Calu3 (cell line): ENCODE measurements at regions of chr3 and their contacts with region 1.

Region 1: DNA sequence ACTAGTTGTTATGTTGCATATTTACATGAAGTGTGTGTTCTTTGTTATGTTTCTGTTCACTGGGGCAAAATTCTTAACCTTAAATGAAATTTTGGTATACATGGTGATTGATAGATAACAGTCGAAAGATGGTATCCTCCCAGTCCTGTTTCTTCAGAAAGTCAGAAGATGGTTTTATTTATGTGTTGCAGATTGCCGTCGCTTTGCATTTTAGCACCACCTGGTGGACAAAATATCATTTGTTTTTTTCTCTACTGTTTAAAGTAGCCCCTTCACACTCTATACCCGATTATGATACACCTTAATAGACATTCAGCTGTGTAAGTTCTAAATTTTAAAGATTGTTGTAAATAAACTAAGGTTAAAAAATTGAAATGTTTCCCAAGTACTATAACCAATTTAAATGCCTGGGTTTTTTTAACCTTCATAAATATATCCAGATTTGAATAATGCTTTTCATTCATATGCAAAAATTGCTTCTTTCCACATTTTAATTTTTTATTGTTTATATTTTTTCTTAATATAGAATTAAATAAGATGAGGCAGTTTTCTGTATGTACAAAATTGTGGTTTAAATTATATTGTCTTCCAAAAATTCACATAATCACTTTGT is 152.2 kb downstream of the ALCAM start:
- DNase-seq: peak; percentile 35
- H3K4me3 Mint-ChIP-seq: no peak overlapping the region
- H3K27ac Mint-ChIP-seq: no peak overlapping the region
- H3K4me1 Mint-ChIP-seq: peaks cover 8% of the 10 kb centered on the region
- H3K27me3 Mint-ChIP-seq: no peaks in the 10 kb centered on the region
- CTCF ChIP-seq: peak; percentile 28

Region 2: DNA sequence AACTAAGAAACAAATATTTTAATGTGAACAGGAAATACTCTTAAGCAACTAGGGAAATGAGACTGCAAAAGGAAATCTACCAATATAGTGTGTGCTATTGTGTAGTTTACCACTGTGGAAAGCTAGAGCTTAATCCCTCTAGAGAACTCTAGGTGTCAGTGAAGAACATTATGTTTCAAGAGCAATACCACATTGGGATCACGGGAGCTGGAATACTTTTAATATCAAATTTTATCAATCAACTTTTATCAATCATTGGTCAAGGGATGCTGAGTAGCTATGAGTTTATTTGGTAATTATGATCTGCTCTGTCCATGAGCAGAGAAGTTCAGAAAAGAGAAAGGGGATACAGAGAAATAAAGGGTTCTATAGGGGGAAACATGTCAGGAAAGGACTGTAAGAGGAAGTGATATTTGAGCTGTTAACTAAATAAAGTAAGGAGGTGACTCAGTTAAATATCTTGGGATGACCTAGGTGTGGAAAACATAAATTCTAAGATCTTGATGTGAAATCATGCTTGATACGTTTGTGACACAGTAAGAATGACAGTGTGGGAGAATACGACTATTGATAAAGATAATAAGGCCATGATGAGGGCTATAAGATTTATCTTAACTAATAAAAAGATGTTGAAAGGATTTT is 914.4 kb before region 1 on chr3:
- CTCF ChIA-PET with region 1: no interaction called
- intact Hi-C with region 1: loop called (anchors 5 kb)
- DNase-seq: no peak
- H3K4me3 Mint-ChIP-seq: peak overlapping the region; percentile 24
- H3K27ac Mint-ChIP-seq: peak overlapping the region; percentile 42
- H3K4me1 Mint-ChIP-seq: peaks cover 10% of the 10 kb centered on the region
- H3K27me3 Mint-ChIP-seq: no peaks in the 10 kb centered on the region
- CTCF ChIP-seq: no peak

Region 3: GRCh38 chr3:105118905-105119304 is 400.0 kb before region 1 on chr3:
- CTCF ChIA-PET with region 1: no interaction called
- intact Hi-C with region 1: loop called (anchors 5 kb)
- DNase-seq: peak; percentile 8
- H3K4me3 Mint-ChIP-seq: no peak overlapping the region
- H3K27ac Mint-ChIP-seq: peak overlapping the region; percentile 77
- H3K4me1 Mint-ChIP-seq: peaks cover 9% of the 10 kb centered on the region
- H3K27me3 Mint-ChIP-seq: no peaks in the 10 kb centered on the region
- CTCF ChIP-seq: no peak

Region 4: GRCh38 chr3:105222568-105223093 is 296.3 kb before region 1 on chr3:
- CTCF ChIA-PET with region 1: no interaction called
- intact Hi-C with region 1: no loop called
- DNase-seq: no peak
- H3K4me3 Mint-ChIP-seq: no peak overlapping the region
- H3K27ac Mint-ChIP-seq: no peak overlapping the region
- H3K4me1 Mint-ChIP-seq: no peaks in the 10 kb centered on the region
- H3K27me3 Mint-ChIP-seq: no peaks in the 10 kb centered on the region
- CTCF ChIP-seq: no peak

Region 5: DNA sequence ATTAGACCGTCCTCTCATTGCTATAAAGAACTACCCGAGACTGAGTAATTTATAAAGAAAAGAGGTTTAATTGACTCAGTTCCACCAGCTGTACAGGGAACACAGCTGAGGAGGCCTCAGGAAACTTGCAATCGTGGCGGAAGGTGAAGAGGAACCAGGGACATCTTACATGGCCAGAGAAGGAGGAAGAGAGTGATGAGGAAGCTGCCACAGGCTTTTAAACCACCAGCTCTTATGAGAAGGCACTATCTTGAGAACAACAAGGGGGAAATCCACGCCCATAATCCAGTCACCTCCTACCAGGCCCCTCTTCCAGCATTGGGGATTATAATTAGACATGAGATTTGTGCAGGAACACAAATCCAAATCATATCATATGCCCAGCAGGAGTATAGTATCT is 13.7 kb before region 1 on chr3:
- CTCF ChIA-PET with region 1: no interaction called
- intact Hi-C with region 1: no loop called
- DNase-seq: no peak
- H3K4me3 Mint-ChIP-seq: no peak overlapping the region
- H3K27ac Mint-ChIP-seq: no peak overlapping the region
- H3K4me1 Mint-ChIP-seq: peaks cover 30% of the 10 kb centered on the region
- H3K27me3 Mint-ChIP-seq: no peaks in the 10 kb centered on the region
- CTCF ChIP-seq: no peak

Region 6: GRCh38 chr3:107323723-107324122 is 1804.8 kb after region 1 on chr3:
- CTCF ChIA-PET with region 1: no interaction called
- intact Hi-C with region 1: no loop called
- DNase-seq: no peak
- H3K4me3 Mint-ChIP-seq: no peak overlapping the region
- H3K27ac Mint-ChIP-seq: no peak overlapping the region
- H3K4me1 Mint-ChIP-seq: no peaks in the 10 kb centered on the region
- H3K27me3 Mint-ChIP-seq: no peaks in the 10 kb centered on the region
- CTCF ChIP-seq: no peak